Activated CD4-positive, alpha-beta T cell treated with anti-CD3 and anti-CD28 coated beads for 36 hours (primary cell): ENCODE measurements at regions of chr18 and their contacts with region 1.

Region 1: DNA sequence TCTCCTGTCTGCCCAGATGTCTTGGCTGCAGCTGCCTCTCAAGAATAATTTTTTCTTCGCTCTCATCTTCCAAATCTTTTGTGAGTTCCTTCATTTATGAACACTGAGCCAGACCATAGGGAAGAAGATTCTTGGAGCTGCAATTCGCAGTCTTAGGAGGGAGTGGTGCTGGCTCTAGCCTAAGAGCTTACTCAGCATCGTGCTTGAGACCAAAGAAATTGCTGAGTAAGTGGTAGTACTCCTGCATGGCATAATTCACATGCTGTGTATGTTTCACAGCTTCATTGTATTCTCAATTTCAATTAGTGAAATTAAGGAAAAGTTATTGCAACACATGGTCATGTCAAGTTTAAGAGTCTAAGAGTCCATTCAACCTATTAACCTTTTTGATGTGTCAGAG is 771.7 kb downstream of the ADCYAP1 start:
- DNase-seq: no peak
- ATAC-seq: no peak
- H3K4me3 Mint-ChIP-seq: no peak overlapping the region
- H3K27ac Mint-ChIP-seq: no peak overlapping the region
- H3K4me1 Mint-ChIP-seq: no peaks in the 10 kb centered on the region
- H3K27me3 Mint-ChIP-seq: no peaks in the 10 kb centered on the region

Region 2: GRCh38 chr18:1663879-1664705 is 12.3 kb before region 1 on chr18:
- CTCF ChIA-PET with region 1: interaction called, 4 read pairs
- POLR2A ChIA-PET with region 1: no interaction called
- intact Hi-C with region 1: loop called in 1 of 2 experiments (anchors 2 kb)
- DNase-seq: peak; percentile 68
- ATAC-seq: peak; percentile 42
- H3K4me3 Mint-ChIP-seq: no peak overlapping the region
- H3K27ac Mint-ChIP-seq: no peak overlapping the region
- H3K4me1 Mint-ChIP-seq: no peaks in the 10 kb centered on the region
- H3K27me3 Mint-ChIP-seq: peaks cover 5% of the 10 kb centered on the region

Region 3: DNA sequence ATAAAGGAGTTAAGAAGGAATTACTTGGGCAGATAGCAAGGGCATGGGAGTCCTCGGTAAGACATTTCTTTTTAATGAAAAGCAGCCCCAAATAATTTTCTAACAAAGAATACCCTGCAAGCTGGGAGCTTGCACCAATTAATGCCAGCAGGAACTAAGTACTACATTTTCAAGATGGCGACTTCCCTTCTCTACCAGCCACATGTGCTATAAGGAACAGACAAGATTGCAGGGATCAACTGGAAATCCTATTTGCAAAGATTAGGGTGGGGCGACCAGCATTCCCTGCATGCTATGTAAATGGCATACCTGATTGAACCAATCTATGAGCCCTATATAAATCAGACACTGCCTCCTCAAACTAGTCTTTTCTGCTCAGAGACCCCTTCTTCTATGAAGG is 55.8 kb after region 1 on chr18:
- CTCF ChIA-PET with region 1: no interaction called
- POLR2A ChIA-PET with region 1: no interaction called
- intact Hi-C with region 1: loop called in 1 of 2 experiments (anchors 5 kb)
- DNase-seq: no peak
- ATAC-seq: no peak
- H3K4me3 Mint-ChIP-seq: no peak overlapping the region
- H3K27ac Mint-ChIP-seq: no peak overlapping the region
- H3K4me1 Mint-ChIP-seq: no peaks in the 10 kb centered on the region
- H3K27me3 Mint-ChIP-seq: no peaks in the 10 kb centered on the region

Region 4: DNA sequence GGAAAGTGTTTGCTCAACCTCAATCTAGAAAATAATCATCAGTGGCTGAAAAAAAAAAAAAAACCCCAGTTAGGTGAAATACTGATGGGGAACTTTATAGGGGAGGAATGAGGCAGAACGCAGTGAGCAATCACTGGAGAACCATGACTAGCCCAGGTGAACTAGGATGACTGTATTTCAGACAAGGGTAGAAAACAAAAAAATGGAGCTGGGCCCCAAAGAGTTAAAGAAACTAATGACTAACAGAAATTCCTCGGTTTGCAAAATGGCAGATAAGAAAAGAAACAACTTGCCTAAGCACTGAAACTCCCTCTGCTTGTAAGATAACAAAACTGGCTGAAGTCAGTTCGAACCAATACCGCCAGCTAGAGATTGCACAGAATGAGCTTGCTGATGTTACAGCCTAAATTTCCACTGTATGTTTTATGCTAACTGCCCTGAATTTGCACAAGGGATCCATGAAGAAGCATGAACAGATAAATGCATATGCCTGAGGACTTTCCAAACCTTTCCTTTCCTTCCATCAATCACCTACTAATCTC is 649.0 kb after region 1 on chr18:
- CTCF ChIA-PET with region 1: no interaction called
- POLR2A ChIA-PET with region 1: no interaction called
- intact Hi-C with region 1: no loop called
- DNase-seq: no peak
- ATAC-seq: peak; percentile 71
- H3K4me3 Mint-ChIP-seq: no peak overlapping the region
- H3K27ac Mint-ChIP-seq: no peak overlapping the region
- H3K4me1 Mint-ChIP-seq: no peaks in the 10 kb centered on the region
- H3K27me3 Mint-ChIP-seq: peaks cover 23% of the 10 kb centered on the region